ENCODE measurements at regions of chr4 and their contacts with region 1.

Region 1: DNA sequence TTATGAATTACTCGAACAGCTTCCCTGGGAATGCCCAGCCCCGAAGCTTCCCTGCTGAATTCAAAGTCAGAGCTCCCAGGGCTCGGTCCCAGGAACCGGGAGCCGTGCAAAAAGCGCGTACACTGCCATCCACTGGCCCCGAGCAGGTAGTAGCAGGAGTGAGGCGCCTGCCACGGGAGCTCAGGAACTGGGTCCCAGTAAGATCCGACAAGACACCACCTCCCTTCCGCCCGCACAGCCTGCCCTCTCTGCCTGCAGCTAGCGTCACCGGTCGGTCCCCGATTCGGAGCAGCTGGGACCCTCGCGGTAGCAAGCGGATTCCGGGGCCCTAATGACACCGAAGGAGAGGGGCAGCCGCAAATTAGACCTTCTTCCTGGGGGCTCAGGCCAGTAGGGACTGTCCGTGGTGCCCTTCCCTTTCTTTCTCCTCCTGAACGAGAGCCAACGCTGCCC is 1.2 kb downstream of the CORIN start:
- DNase-seq: peak in 1 of 2 experiments; percentile 79
- H3K4me3 ChIP-seq: peak overlapping the region; percentile 44 to 71 (median 61)
- H3K27ac ChIP-seq: no peak overlapping the region
- H3K4me1 ChIP-seq: peaks cover 0 to 8% (median 0%) of the 10 kb centered on the region in 4 experiments; a peak in 4 of 7 replicates
- H3K27me3 ChIP-seq: peaks cover 0 to 14% (median 6%) of the 10 kb centered on the region in 4 experiments; a peak in 3 of 7 replicates
- CTCF ChIP-seq: peak; percentile 74 to 87 (median 84)
- EP300 ChIP-seq: no peak
- POLR2A ChIP-seq: no peak
- RAD21 ChIP-seq: peak; percentile 87 to 90

Region 2: GRCh38 chr4:47639531-47639930 is 197.1 kb before region 1 on chr4:
- CTCF ChIA-PET with region 1: no interaction called
- POLR2A ChIA-PET with region 1: no interaction called
- DNase-seq: no peak
- H3K4me3 ChIP-seq: no peak overlapping the region
- H3K27ac ChIP-seq: no peak overlapping the region
- H3K4me1 ChIP-seq: peaks cover 0 to 2% (median 0%) of the 10 kb centered on the region in 4 experiments; a peak in 1 of 7 replicates
- H3K27me3 ChIP-seq: no peaks in the 10 kb centered on the region
- CTCF ChIP-seq: no peak
- EP300 ChIP-seq: no peak
- POLR2A ChIP-seq: no peak
- RAD21 ChIP-seq: no peak

Region 3: GRCh38 chr4:47668810-47669408 is 167.8 kb before region 1 on chr4:
- CTCF ChIA-PET with region 1: interaction called, 19 read pairs
- POLR2A ChIA-PET with region 1: no interaction called
- DNase-seq: no peak
- H3K4me3 ChIP-seq: no peak overlapping the region
- H3K27ac ChIP-seq: no peak overlapping the region
- H3K4me1 ChIP-seq: no peaks in the 10 kb centered on the region
- H3K27me3 ChIP-seq: no peaks in the 10 kb centered on the region
- CTCF ChIP-seq: peak in 2 of 3 experiments; percentile 40 to 48; a peak in 3 of 4 replicates
- EP300 ChIP-seq: no peak
- POLR2A ChIP-seq: no peak
- RAD21 ChIP-seq: peak; percentile 53 to 63

Region 4: GRCh38 chr4:47686294-47686872 is 150.3 kb before region 1 on chr4:
- CTCF ChIA-PET with region 1: interaction called, 28 read pairs
- POLR2A ChIA-PET with region 1: interaction called, 3 read pairs
- DNase-seq: peak; percentile 19 to 82
- H3K4me3 ChIP-seq: no peak overlapping the region
- H3K27ac ChIP-seq: no peak overlapping the region
- H3K4me1 ChIP-seq: no peaks in the 10 kb centered on the region
- H3K27me3 ChIP-seq: no peaks in the 10 kb centered on the region
- CTCF ChIP-seq: peak; percentile 83 to 84 (median 84)
- EP300 ChIP-seq: no peak
- POLR2A ChIP-seq: no peak
- RAD21 ChIP-seq: peak; percentile 84 to 87

Region 5: GRCh38 chr4:47715716-47716416 is 120.8 kb before region 1 on chr4:
- CTCF ChIA-PET with region 1: interaction called, 282 read pairs
- POLR2A ChIA-PET with region 1: interaction called, 3 read pairs
- DNase-seq: no peak
- H3K4me3 ChIP-seq: no peak overlapping the region
- H3K27ac ChIP-seq: no peak overlapping the region
- H3K4me1 ChIP-seq: peaks cover 0 to 7% (median 4%) of the 10 kb centered on the region in 4 experiments; a peak in 4 of 7 replicates
- H3K27me3 ChIP-seq: peaks cover 0 to 2% (median under 1%) of the 10 kb centered on the region in 4 experiments; a peak in 2 of 7 replicates
- CTCF ChIP-seq: no peak
- EP300 ChIP-seq: no peak
- POLR2A ChIP-seq: no peak
- RAD21 ChIP-seq: no peak

Region 6: GRCh38 chr4:47824840-47825239 is 11.8 kb before region 1 on chr4:
- CTCF ChIA-PET with region 1: interaction called, 12 read pairs
- POLR2A ChIA-PET with region 1: interaction called, 6 read pairs
- DNase-seq: no peak
- H3K4me3 ChIP-seq: no peak overlapping the region
- H3K27ac ChIP-seq: no peak overlapping the region
- H3K4me1 ChIP-seq: no peaks in the 10 kb centered on the region
- H3K27me3 ChIP-seq: no peaks in the 10 kb centered on the region
- CTCF ChIP-seq: no peak
- EP300 ChIP-seq: no peak
- POLR2A ChIP-seq: no peak
- RAD21 ChIP-seq: no peak

Region 7: GRCh38 chr4:47848041-47848440 is 11.4 kb after region 1 on chr4:
- CTCF ChIA-PET with region 1: interaction called, 14 read pairs
- POLR2A ChIA-PET with region 1: no interaction called
- DNase-seq: no peak
- H3K4me3 ChIP-seq: no peak overlapping the region
- H3K27ac ChIP-seq: no peak overlapping the region
- H3K4me1 ChIP-seq: no peaks in the 10 kb centered on the region
- H3K27me3 ChIP-seq: no peaks in the 10 kb centered on the region
- CTCF ChIP-seq: no peak
- EP300 ChIP-seq: no peak
- POLR2A ChIP-seq: no peak
- RAD21 ChIP-seq: no peak